ENCODE measurements at regions of chr16 and their contacts with region 1.

Region 1: DNA sequence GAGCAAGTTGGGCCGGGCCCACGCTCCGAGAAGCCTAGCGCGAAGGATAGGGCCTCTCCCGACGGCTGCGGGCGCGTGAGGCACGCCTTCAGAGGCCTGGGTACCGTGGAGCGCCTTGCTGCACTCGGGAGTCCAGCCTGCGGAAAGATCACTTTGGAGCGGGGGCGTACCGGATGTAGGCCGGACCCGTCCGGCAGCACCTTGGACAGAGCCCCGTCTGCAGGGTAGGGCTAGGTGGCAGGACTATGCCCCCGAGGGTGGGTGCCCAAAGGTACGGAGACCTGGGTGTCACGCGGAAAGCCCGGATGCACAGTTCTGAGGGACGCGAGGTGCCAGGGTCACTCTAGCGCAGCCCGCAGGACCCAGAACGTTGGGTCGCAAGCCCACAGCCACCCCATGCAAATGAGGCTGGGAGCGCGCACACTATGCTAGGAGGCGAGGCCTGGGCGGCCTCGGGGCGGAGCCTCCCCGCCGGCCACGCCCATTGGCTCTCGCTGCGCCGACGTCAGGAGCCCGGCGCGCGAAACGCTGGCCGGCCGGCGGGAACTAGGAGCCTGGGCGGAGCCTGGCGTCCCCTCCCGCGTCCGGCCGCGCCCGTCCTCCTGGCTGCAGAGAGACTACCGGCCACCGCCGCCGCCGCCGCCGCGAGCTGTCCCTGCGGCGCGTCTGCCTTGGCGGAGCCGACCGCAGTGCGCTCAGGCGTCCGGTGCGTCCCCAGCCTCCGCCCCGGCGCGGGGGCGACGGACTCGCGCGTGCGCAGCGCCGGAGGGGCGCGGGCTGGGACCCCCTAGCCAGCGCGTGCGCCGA is at the start of gene PAQR4:
- DNase-seq: peak; percentile 94
- H3K4me3 ChIP-seq: peak within 1 kb of the TSS; percentile 99
- H3K27ac ChIP-seq: peak within 1 kb of the TSS; percentile 64
- H3K4me1 ChIP-seq: peaks cover 57% of the 10 kb centered on the region
- CTCF ChIP-seq: no peak
- total RNA-seq, gene PAQR4: 38.1 and 49.1 TPM in 2 replicates

Region 2: DNA sequence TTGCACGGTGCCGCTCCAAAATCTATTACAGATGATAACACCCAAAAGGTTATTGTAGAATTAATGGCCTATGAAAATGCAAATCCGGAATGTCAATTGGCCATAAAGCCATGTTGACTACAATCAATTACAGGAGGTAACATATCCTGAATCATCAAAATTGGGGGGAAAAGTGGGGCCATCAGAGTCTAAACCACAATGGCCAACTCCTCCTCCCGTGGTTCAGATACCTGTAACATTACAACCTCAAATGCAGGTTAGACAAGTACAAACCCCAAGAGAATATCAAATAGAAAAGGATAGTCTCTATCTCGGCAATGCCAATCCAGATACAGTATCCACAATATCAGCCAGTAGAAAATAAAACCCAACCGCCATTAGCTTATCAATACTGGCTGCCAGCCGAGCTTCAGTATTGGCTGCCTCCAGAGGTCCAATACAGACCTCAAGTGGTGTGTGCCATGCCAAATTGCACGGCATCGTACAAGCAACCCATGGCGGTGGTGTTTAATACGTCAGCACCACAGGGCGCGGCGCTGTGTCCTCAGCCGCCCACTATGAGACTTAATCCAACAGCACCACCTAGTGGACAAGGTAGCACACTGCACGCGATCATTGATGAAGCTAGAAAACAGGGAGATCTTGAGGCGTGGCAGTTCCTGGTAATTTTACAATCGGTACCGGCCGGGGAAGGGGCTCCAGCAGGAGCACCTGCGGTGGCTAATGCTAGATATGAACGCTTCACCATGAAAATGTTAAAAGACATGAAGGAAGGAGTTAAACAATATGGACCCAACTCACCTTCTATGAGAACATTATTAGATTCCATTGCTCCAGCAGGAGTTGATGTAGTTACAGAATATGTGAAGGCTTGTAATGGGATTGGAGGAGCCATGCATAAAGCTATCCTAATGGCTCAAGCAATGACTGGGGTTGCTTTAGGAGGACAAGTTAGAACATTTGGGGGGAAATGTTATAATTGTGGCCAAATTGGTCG is 42.0 kb before region 1 on chr16:
- CTCF ChIA-PET with region 1: no interaction called
- POLR2A ChIA-PET with region 1: no interaction called
- intact Hi-C with region 1: loop called (anchors 5 kb)
- DNase-seq: peak; percentile 86
- H3K4me3 ChIP-seq: no peak overlapping the region
- H3K27ac ChIP-seq: no peak overlapping the region
- H3K4me1 ChIP-seq: peaks cover 4% of the 10 kb centered on the region
- CTCF ChIP-seq: peak; percentile 98

Region 3: GRCh38 chr16:2954656-2955381 is 14.1 kb before region 1 on chr16:
- CTCF ChIA-PET with region 1: no interaction called
- POLR2A ChIA-PET with region 1: interaction called, 3 read pairs
- intact Hi-C with region 1: loop called (anchors 1 kb)
- DNase-seq: no peak
- H3K4me3 ChIP-seq: no peak overlapping the region
- H3K27ac ChIP-seq: peak overlapping the region; percentile 65
- H3K4me1 ChIP-seq: peaks cover 50% of the 10 kb centered on the region
- CTCF ChIP-seq: no peak

Region 4: GRCh38 chr16:2980227-2981086 is 11.5 kb after region 1 on chr16 and contains the start of gene PKMYT1:
- CTCF ChIA-PET with region 1: interaction called, 3 read pairs
- POLR2A ChIA-PET with region 1: interaction called, 9 read pairs
- intact Hi-C with region 1: loop called (anchors 1 kb)
- DNase-seq: peak; percentile 94
- H3K4me3 ChIP-seq: peak within 1 kb of the TSS; percentile 80
- H3K27ac ChIP-seq: peak within 1 kb of the TSS; percentile 67
- H3K4me1 ChIP-seq: peaks cover 48% of the 10 kb centered on the region
- CTCF ChIP-seq: no peak
- total RNA-seq, gene PKMYT1: 80.2 and 104 TPM in 2 replicates

Region 5: DNA sequence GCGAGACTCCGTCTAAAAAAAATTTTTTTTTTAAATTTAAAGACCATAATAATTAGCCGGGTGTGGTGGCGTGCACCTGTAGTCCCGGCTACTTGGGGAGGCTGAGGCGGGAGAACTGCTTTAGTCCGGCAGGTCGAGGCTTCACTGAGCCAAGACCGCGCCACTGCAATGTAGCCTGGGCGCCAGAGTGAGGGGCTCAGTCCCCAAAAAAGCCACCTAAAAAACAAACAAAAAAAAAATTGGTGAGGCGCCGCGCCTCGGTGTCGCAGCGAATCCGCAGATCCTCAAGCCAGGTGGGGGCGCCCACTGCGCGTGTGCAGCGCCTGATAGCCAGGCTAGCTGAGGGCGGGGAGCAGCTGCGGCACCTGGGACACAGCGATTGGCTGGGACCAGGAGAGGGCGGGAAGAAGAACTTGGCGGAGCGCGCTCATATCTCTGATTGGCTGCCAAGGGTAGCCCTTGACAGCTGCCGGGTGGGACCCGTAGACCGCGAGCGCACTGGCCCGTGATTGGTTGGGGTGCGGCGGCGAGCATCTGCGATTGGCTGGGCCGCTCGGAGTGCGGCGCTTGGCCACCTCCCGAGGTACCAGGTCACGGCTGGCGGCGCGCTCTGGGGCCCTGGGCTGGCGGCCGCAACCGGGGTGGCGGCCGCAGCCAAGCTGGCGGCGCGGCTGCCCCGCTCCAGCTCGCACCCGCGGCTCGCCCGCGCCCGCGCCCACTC is 34.8 kb after region 1 on chr16:
- CTCF ChIA-PET with region 1: no interaction called
- POLR2A ChIA-PET with region 1: no interaction called
- intact Hi-C with region 1: loop called (anchors 1 kb)
- DNase-seq: peak; percentile 99
- H3K4me3 ChIP-seq: peak overlapping the region; percentile 15
- H3K27ac ChIP-seq: no peak overlapping the region
- H3K4me1 ChIP-seq: peaks cover 23% of the 10 kb centered on the region
- CTCF ChIP-seq: peak; percentile 82

Region 6: DNA sequence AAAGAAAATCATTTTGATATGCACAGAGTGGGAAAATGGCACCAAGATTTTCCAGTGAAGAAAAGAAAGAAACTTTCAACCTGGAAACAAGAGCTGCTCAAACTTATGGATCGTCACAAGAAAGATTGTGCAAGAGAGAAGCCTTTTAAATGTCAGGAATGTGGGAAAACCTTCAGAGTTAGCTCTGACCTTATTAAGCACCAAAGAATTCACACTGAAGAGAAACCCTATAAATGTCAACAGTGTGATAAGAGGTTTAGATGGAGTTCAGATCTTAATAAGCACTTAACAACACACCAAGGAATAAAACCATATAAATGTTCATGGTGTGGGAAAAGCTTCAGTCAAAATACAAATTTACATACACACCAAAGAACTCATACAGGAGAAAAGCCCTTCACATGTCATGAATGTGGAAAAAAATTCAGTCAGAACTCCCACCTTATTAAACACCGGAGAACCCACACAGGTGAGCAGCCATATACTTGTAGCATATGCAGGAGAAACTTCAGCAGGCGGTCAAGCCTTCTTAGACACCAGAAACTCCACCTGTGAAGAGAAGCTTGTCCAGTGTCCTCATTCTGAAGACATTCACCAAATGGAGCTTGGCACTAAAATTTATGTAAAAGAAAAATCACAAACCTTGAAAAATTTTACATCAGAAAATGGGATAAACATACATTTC is 348.5 kb after region 1 on chr16:
- CTCF ChIA-PET with region 1: no interaction called
- POLR2A ChIA-PET with region 1: no interaction called
- intact Hi-C with region 1: no loop called
- DNase-seq: no peak
- H3K4me3 ChIP-seq: no peak overlapping the region
- H3K27ac ChIP-seq: no peak overlapping the region
- H3K4me1 ChIP-seq: no peaks in the 10 kb centered on the region
- CTCF ChIP-seq: no peak